ENCODE measurements at regions of chr19 and their contacts with region 1.

Region 1: DNA sequence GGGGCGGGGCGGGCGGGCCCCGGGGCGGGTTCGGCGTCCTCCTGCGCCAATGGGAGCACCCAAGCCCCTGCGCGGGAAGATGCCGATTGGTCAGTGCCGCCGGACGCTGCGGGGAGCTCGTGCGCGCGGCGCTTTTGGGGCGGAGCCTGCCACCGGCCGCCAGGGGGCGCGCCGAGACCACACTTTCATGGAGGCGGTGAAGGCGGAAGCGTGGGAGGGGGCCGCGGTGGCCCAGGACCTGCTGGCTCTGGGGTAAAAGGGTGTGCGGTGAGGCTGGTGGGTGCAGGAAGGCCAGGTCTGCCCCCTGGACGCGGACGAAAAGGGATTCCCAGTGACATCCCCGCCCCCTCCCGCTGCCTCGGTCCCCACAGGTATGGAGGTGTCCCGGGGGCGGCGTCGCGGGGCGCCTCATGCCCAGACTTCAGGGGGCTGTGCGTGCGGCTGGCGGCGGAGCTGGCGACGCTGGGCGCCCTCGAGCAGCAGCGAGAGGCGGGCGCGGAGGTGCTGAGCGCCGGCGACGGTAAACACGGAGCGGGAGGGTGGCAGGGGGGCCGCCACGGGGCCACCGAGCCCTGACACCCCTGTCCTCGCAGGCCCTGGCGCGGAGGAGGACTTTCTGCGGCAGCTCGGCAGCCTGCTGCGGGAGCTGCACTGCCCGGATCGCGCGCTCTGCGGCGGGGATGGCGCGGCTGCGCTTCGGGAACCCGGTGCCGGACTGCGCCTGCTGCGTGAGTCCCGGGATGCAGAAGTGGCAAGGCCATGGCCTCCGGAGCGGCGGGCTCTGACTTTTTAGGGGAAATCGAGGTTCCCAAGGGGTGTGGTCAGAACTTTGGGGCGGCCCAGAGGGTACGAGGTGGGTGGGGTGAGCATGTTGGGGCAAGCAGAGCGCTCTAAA is at the start of gene FAM98C:
- DNase-seq: peak; percentile 92
- ATAC-seq: peak; percentile 98
- H3K4me3 ChIP-seq: peak within 1 kb of the TSS; percentile 82 to 91
- H3K27ac ChIP-seq: peak within 1 kb of the TSS; percentile 95
- H3K4me1 ChIP-seq: peaks cover 8 to 17% of the 10 kb centered on the region in 2 experiments; a peak in 3 of 4 replicates
- H3K27me3 ChIP-seq: no peaks in the 10 kb centered on the region
- CTCF ChIP-seq: peak; percentile 85 to 90 (median 89)
- POLR2A ChIP-seq: no peak
- RAD21 ChIP-seq: peak; percentile 94
- total RNA-seq, gene FAM98C: 33.8 TPM

Region 2: DNA sequence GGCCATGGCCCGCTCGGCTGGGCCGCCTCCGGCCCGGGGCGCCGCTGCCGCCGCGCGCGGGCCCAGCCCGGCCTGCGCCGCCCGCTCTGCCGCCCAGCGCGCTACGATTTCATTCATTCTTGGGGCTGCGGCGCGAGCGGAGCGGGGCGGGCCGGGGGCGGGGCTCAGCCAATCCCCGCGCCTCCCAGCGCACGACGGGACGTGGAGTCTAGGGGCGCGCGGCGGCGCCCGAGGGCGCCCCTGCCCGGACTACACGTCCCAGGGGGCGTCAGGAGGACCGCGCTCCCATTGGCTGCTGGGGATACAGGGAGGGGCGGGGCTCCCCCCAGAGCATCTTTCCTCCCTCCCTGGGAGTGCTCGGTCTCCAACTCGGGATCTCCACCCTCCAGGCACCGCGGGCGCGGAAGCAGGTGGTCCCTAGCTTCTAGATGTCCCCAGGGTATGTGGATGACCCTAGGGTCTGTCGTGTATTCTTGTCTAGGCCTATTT is 173.6 kb before region 1 on chr19:
- CTCF ChIA-PET with region 1: interaction called, 10 read pairs
- POLR2A ChIA-PET with region 1: no interaction called
- RAD21 ChIA-PET with region 1: interaction called in 1 of 2 experiments, 4 read pairs
- intact Hi-C with region 1: loop called (anchors 5 kb)
- DNase-seq: peak; percentile 85
- ATAC-seq: peak; percentile 91
- H3K4me3 ChIP-seq: peak overlapping the region; percentile 54 to 61; a peak in 2 of 4 replicates
- H3K27ac ChIP-seq: no peak overlapping the region
- H3K4me1 ChIP-seq: peaks cover 10 to 33% of the 10 kb centered on the region in 2 experiments; a peak in 3 of 4 replicates
- H3K27me3 ChIP-seq: no peaks in the 10 kb centered on the region
- CTCF ChIP-seq: no peak
- POLR2A ChIP-seq: no peak
- RAD21 ChIP-seq: no peak

Region 3: GRCh38 chr19:38290631-38291157 is 112.5 kb before region 1 on chr19:
- CTCF ChIA-PET with region 1: no interaction called
- POLR2A ChIA-PET with region 1: no interaction called
- RAD21 ChIA-PET with region 1: no interaction called
- intact Hi-C with region 1: no loop called
- DNase-seq: no peak
- ATAC-seq: no peak
- H3K4me3 ChIP-seq: no peak overlapping the region
- H3K27ac ChIP-seq: no peak overlapping the region
- H3K4me1 ChIP-seq: peaks cover under 1% of the 10 kb centered on the region in 2 experiments; a peak in 1 of 4 replicates
- H3K27me3 ChIP-seq: no peaks in the 10 kb centered on the region
- CTCF ChIP-seq: no peak
- POLR2A ChIP-seq: no peak
- RAD21 ChIP-seq: no peak

Region 4: GRCh38 chr19:38387550-38388348 is 15.5 kb before region 1 on chr19 and contains the start of gene GGN:
- CTCF ChIA-PET with region 1: interaction called, 49 read pairs
- POLR2A ChIA-PET with region 1: interaction called, 22 read pairs
- RAD21 ChIA-PET with region 1: interaction called, 10 to 11 read pairs
- intact Hi-C with region 1: no loop called
- DNase-seq: peak; percentile 88
- ATAC-seq: peak; percentile 82
- H3K4me3 ChIP-seq: peak within 1 kb of the TSS; percentile 64 to 68
- H3K27ac ChIP-seq: peak within 1 kb of the TSS; percentile 63
- H3K4me1 ChIP-seq: peaks cover 11 to 47% of the 10 kb centered on the region in 2 experiments
- H3K27me3 ChIP-seq: no peaks in the 10 kb centered on the region
- CTCF ChIP-seq: no peak
- POLR2A ChIP-seq: no peak
- RAD21 ChIP-seq: no peak
- total RNA-seq, gene GGN: 0.47 TPM

Region 5: GRCh38 chr19:38478273-38478967 is 75.2 kb after region 1 on chr19:
- CTCF ChIA-PET with region 1: interaction called, 10 read pairs
- POLR2A ChIA-PET with region 1: no interaction called
- RAD21 ChIA-PET with region 1: no interaction called
- intact Hi-C with region 1: no loop called
- DNase-seq: peak; percentile 35
- ATAC-seq: peak; percentile 90
- H3K4me3 ChIP-seq: no peak overlapping the region
- H3K27ac ChIP-seq: no peak overlapping the region
- H3K4me1 ChIP-seq: no peaks in the 10 kb centered on the region
- H3K27me3 ChIP-seq: no peaks in the 10 kb centered on the region
- CTCF ChIP-seq: peak; percentile 46 to 60 (median 57); a peak in 5 of 6 replicates
- POLR2A ChIP-seq: no peak
- RAD21 ChIP-seq: peak; percentile 79

Region 6: GRCh38 chr19:38514812-38515633 is 111.8 kb after region 1 on chr19:
- CTCF ChIA-PET with region 1: interaction called, 11 read pairs
- POLR2A ChIA-PET with region 1: no interaction called
- RAD21 ChIA-PET with region 1: no interaction called
- intact Hi-C with region 1: loop called (anchors 10 kb)
- DNase-seq: peak; percentile 27
- ATAC-seq: peak; percentile 97
- H3K4me3 ChIP-seq: no peak overlapping the region
- H3K27ac ChIP-seq: no peak overlapping the region
- H3K4me1 ChIP-seq: peaks cover 2 to 9% of the 10 kb centered on the region in 2 experiments; a peak in 2 of 4 replicates
- H3K27me3 ChIP-seq: no peaks in the 10 kb centered on the region
- CTCF ChIP-seq: peak; percentile 74 to 91 (median 84)
- POLR2A ChIP-seq: no peak
- RAD21 ChIP-seq: peak; percentile 89

Region 7: GRCh38 chr19:38634757-38635482 is 231.7 kb after region 1 on chr19:
- CTCF ChIA-PET with region 1: interaction called, 28 read pairs
- POLR2A ChIA-PET with region 1: no interaction called
- RAD21 ChIA-PET with region 1: interaction called in 1 of 2 experiments, 4 read pairs
- intact Hi-C with region 1: loop called (anchors 2 kb)
- DNase-seq: no peak
- ATAC-seq: peak; percentile 50
- H3K4me3 ChIP-seq: no peak overlapping the region
- H3K27ac ChIP-seq: no peak overlapping the region; the same call in 1 of the 2 replicates
- H3K4me1 ChIP-seq: peaks cover 15 to 49% of the 10 kb centered on the region in 2 experiments
- H3K27me3 ChIP-seq: no peaks in the 10 kb centered on the region
- CTCF ChIP-seq: peak; percentile 72 to 95 (median 88)
- POLR2A ChIP-seq: no peak
- RAD21 ChIP-seq: peak; percentile 76

Region 8: DNA sequence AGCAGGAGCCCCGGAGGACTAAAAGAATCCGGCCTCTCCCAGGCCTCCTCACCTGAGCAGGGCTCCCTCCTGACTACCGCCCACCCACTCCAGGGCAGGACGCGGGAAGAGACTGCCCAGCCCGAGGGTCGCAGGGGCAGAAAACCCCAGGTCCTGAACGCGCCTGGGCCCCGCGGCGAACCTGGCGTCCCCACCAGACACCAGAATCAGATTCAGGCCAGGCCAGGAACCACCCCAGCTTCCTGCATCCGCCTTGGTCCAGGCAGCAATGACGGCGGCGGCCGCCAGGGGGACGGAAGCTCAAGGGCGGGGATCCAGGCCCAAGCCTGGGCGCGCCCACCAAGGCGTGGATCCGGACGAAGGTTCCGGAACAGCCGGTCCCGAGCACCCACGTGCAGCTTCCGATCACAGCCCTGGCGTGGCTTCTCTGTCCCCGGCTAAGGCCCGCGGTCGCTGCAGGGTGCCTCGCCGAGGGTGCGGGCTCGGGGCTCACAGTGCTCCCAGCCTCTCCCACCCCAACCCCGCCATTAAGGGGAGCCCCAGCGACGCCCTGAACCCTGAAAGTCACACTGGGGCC is 366.5 kb after region 1 on chr19:
- CTCF ChIA-PET with region 1: no interaction called
- POLR2A ChIA-PET with region 1: no interaction called
- RAD21 ChIA-PET with region 1: no interaction called
- intact Hi-C with region 1: no loop called
- DNase-seq: peak; percentile 19
- ATAC-seq: peak; percentile 79
- H3K4me3 ChIP-seq: no peak overlapping the region
- H3K27ac ChIP-seq: peak overlapping the region; percentile 52; the same call in 1 of the 2 replicates
- H3K4me1 ChIP-seq: peaks cover 0 to 6% of the 10 kb centered on the region in 2 experiments; a peak in 1 of 4 replicates
- H3K27me3 ChIP-seq: no peaks in the 10 kb centered on the region
- CTCF ChIP-seq: peak; percentile 38 to 67 (median 60); a peak in 5 of 6 replicates
- POLR2A ChIP-seq: no peak
- RAD21 ChIP-seq: peak; percentile 57

Region 9: GRCh38 chr19:38891771-38892170 is 488.6 kb after region 1 on chr19:
- CTCF ChIA-PET with region 1: interaction called, 10 read pairs
- POLR2A ChIA-PET with region 1: no interaction called
- RAD21 ChIA-PET with region 1: interaction called in 1 of 2 experiments, 3 read pairs
- intact Hi-C with region 1: no loop called
- DNase-seq: no peak
- ATAC-seq: no peak
- H3K4me3 ChIP-seq: no peak overlapping the region
- H3K27ac ChIP-seq: no peak overlapping the region
- H3K4me1 ChIP-seq: peaks cover 0 to 5% of the 10 kb centered on the region in 2 experiments; a peak in 2 of 4 replicates
- H3K27me3 ChIP-seq: no peaks in the 10 kb centered on the region
- CTCF ChIP-seq: no peak
- POLR2A ChIP-seq: no peak
- RAD21 ChIP-seq: no peak